Dendritic cell treated with granulocyte-macrophage colony-stimulating factor and Interleukin-4, amounts not matched to agents 40 ng/mL and 50 ng/mL, for 4 days (primary cell): ENCODE measurements at regions of chr10 and their contacts with region 1.

Region 1: DNA sequence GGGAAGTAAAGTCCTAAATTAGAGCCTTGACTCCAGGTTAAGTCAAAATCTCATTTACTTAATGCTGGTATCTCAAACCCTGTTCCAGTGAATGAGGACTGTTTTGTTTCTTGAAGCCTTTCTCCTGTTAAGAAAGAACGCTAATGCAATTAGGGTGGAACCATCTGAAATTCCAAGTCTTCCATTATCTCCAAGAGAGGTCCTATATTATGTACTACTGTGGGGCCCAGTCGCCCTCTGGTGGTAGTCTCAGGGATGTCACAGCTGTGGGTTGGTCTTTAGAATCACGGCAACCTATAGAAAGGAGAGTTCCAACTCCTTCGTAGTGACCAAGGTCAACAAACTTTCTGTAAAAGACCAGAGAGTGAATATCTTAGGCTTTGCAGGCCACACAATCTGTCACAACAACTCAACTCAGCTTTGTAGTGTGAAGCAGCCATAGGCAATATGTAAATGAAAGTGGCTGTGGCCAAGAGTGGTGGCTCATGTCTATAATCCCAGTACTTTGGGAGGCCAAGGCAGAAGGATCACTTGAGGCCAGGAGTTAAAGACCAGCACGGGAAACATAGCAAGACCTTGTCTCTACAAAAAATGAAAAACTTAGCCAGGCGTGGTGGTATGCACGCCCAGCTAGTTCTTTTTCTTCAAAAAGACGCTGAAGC is 9.3 kb downstream of the RPP38 start:
- H3K4me3 Mint-ChIP-seq: no peak overlapping the region
- H3K27ac Mint-ChIP-seq: no peak overlapping the region
- H3K4me1 Mint-ChIP-seq: no peaks in the 10 kb centered on the region
- H3K27me3 Mint-ChIP-seq: no peaks in the 10 kb centered on the region

Region 2: GRCh38 chr10:14507176-14507575 is 599.3 kb before region 1 on chr10:
- intact Hi-C with region 1: loop called (anchors 10 kb)
- H3K4me3 Mint-ChIP-seq: no peak overlapping the region
- H3K27ac Mint-ChIP-seq: no peak overlapping the region
- H3K4me1 Mint-ChIP-seq: no peaks in the 10 kb centered on the region
- H3K27me3 Mint-ChIP-seq: no peaks in the 10 kb centered on the region

Region 3: GRCh38 chr10:14918964-14919363 is 187.5 kb before region 1 on chr10:
- intact Hi-C with region 1: no loop called
- H3K4me3 Mint-ChIP-seq: no peak overlapping the region
- H3K27ac Mint-ChIP-seq: no peak overlapping the region
- H3K4me1 Mint-ChIP-seq: peaks cover 7% of the 10 kb centered on the region
- H3K27me3 Mint-ChIP-seq: no peaks in the 10 kb centered on the region

Region 4: GRCh38 chr10:14971867-14972448 is 134.5 kb before region 1 on chr10:
- intact Hi-C with region 1: no loop called
- H3K4me3 Mint-ChIP-seq: no peak overlapping the region
- H3K27ac Mint-ChIP-seq: no peak overlapping the region
- H3K4me1 Mint-ChIP-seq: peaks cover 5% of the 10 kb centered on the region
- H3K27me3 Mint-ChIP-seq: peaks cover 6% of the 10 kb centered on the region